Dendritic cell treated with granulocyte-macrophage colony-stimulating factor and Interleukin-4, amounts not matched to agents 40 ng/mL and 50 ng/mL, for 4 days (primary cell): ENCODE measurements at regions of chr14 and their contacts with region 1.

Region 1: GRCh38 chr14:34098045-34098984 is 147.4 kb upstream of the EGLN3 start:
- H3K4me3 Mint-ChIP-seq: no peak overlapping the region
- H3K27ac Mint-ChIP-seq: no peak overlapping the region
- H3K4me1 Mint-ChIP-seq: no peaks in the 10 kb centered on the region
- H3K27me3 Mint-ChIP-seq: peaks cover 4% of the 10 kb centered on the region

Region 2: GRCh38 chr14:34227834-34228649 is 129.7 kb after region 1 on chr14:
- intact Hi-C with region 1: loop called (anchors 1 kb)
- H3K4me3 Mint-ChIP-seq: no peak overlapping the region
- H3K27ac Mint-ChIP-seq: no peak overlapping the region
- H3K4me1 Mint-ChIP-seq: no peaks in the 10 kb centered on the region
- H3K27me3 Mint-ChIP-seq: peaks cover 20% of the 10 kb centered on the region